AG04449 (cell line): ENCODE measurements at regions of chr2 and their contacts with region 1.

Region 1: DNA sequence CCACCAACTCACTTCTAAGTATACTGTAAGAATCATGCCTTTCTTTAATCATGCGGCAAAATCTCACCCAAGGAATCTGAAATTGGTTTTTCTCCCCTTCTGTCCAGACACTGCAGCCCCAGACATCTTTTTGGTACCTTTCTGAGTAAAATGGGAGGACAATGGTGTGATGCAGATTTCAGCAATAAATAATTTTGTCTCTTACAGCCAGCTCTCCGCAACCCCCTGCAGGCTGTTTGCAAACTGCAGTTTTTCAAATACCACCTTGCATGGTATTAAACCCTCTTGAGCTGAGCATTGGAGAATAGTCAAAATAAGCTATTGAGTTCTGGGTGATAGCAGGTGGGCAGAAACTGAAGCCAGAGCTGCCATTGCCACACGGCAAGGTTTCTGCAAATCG is 32.2 kb downstream of the GPR39 start:
- DNase-seq: no peak
- H3K4me3 ChIP-seq: no peak overlapping the region
- CTCF ChIP-seq: peak; percentile 54

Region 2: GRCh38 chr2:132438691-132439090 is 10.1 kb before region 1 on chr2:
- CTCF ChIA-PET with region 1: interaction called, 17 read pairs
- POLR2A ChIA-PET with region 1: no interaction called
- DNase-seq: peak; percentile 81
- H3K4me3 ChIP-seq: no peak overlapping the region
- CTCF ChIP-seq: no peak

Region 3: DNA sequence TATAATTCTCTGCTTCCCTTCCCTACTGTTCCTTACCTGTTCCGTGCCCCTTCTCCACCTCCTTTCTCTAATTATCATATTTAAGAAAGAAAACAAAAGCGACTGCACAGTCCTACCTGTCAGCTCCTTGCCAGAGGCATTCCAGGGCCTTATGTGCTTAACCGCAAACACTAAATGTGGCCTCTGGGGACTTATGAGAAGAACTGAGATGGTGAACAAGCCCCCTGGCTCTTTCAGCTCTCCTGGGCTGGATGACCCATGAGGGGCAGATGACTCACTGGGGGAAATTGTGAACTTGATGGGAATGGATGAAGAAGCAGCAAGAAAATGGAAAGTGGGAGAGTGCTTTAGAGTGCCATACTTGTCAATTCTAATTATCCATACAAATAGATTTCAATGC is 327.5 kb after region 1 on chr2:
- CTCF ChIA-PET with region 1: no interaction called
- POLR2A ChIA-PET with region 1: no interaction called
- DNase-seq: no peak
- H3K4me3 ChIP-seq: no peak overlapping the region
- CTCF ChIP-seq: no peak